Endothelial cell of umbilical vein (primary cell): ENCODE measurements at regions of chr19 and their contacts with region 1.

Region 1: GRCh38 chr19:1020868-1021425 is at the start of gene TMEM259:
- DNase-seq: peak; percentile 97
- H3K4me3 ChIP-seq: peak within 1 kb of the TSS; percentile 80 to 90 (median 88)
- H3K27ac ChIP-seq: peak within 1 kb of the TSS; percentile 95
- H3K4me1 ChIP-seq: peaks cover 40% of the 10 kb centered on the region
- H3K27me3 ChIP-seq: no peaks in the 10 kb centered on the region
- CTCF ChIP-seq: no peak
- POLR2A ChIP-seq: no peak
- total RNA-seq, gene TMEM259: 142 and 147 TPM in 2 replicates

Region 2: GRCh38 chr19:958967-959820 is 61.8 kb before region 1 on chr19:
- CTCF ChIA-PET with region 1: no interaction called
- POLR2A ChIA-PET with region 1: no interaction called
- dilution Hi-C with region 1: no loop called
- intact Hi-C with region 1: no loop called
- DNase-seq: no peak
- H3K4me3 ChIP-seq: no peak overlapping the region
- H3K27ac ChIP-seq: no peak overlapping the region
- H3K4me1 ChIP-seq: no peaks in the 10 kb centered on the region
- H3K27me3 ChIP-seq: no peaks in the 10 kb centered on the region
- CTCF ChIP-seq: no peak
- POLR2A ChIP-seq: no peak

Region 3: DNA sequence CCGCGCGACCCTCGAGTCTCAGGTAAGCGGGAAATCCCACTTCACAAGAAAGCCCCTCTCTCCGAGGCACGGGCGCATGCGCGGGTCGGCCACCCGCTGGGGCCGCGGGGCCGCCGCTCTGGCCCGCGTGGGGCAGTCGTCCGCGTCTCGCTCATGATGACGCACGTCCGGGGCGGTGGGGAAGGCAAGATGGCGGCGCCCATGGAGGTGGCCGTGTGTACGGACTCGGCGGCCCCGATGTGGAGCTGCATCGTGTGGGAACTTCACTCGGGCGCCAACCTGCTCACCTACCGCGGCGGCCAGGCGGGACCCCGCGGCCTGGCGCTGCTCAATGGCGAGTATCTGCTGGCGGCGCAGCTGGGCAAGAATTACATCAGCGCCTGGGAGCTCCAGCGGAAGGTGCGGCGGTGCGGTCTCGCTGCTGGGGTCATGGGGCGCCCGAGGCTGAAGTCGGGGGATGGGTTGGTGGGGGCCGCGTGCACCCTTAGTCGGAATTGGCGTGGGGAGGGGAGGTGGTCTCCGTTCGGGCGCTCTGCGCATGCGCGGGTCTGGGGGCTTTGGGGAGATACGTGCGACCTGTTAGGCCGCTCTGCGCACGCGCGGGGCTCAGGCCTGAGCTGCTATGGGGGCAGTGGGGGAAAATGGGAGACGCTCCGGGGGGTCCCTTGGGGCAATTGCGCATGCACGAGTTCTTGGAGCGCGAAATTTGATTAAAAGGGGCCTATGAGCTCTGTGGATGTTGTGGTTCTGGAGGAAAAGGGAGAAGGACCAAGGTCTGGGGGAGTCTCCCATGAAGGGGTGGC is 36.6 kb before region 1 on chr19 and contains the start of gene WDR18:
- CTCF ChIA-PET with region 1: interaction called, 5 read pairs
- POLR2A ChIA-PET with region 1: no interaction called
- dilution Hi-C with region 1: no loop called
- intact Hi-C with region 1: loop called (anchors 1 kb)
- DNase-seq: peak; percentile 85
- H3K4me3 ChIP-seq: peak within 1 kb of the TSS; percentile 79 to 95 (median 83)
- H3K27ac ChIP-seq: peak within 1 kb of the TSS; percentile 79
- H3K4me1 ChIP-seq: peaks cover 11% of the 10 kb centered on the region
- H3K27me3 ChIP-seq: no peaks in the 10 kb centered on the region
- CTCF ChIP-seq: peak in 1 of 2 donors; percentile 19
- POLR2A ChIP-seq: peak; percentile 67
- total RNA-seq, gene WDR18: 54.8 and 74.7 TPM in 2 replicates

Region 4: GRCh38 chr19:1001538-1002166 is 19.3 kb before region 1 on chr19:
- CTCF ChIA-PET with region 1: interaction called, 4 read pairs
- POLR2A ChIA-PET with region 1: interaction called, 3 read pairs
- dilution Hi-C with region 1: no loop called
- intact Hi-C with region 1: loop called (anchors 2 kb)
- DNase-seq: peak; percentile 37
- H3K4me3 ChIP-seq: no peak overlapping the region
- H3K27ac ChIP-seq: no peak overlapping the region
- H3K4me1 ChIP-seq: no peaks in the 10 kb centered on the region
- H3K27me3 ChIP-seq: peaks cover 17 to 19% of the 10 kb centered on the region in 2 experiments
- CTCF ChIP-seq: peak; percentile 84 to 89
- POLR2A ChIP-seq: no peak

Region 5: DNA sequence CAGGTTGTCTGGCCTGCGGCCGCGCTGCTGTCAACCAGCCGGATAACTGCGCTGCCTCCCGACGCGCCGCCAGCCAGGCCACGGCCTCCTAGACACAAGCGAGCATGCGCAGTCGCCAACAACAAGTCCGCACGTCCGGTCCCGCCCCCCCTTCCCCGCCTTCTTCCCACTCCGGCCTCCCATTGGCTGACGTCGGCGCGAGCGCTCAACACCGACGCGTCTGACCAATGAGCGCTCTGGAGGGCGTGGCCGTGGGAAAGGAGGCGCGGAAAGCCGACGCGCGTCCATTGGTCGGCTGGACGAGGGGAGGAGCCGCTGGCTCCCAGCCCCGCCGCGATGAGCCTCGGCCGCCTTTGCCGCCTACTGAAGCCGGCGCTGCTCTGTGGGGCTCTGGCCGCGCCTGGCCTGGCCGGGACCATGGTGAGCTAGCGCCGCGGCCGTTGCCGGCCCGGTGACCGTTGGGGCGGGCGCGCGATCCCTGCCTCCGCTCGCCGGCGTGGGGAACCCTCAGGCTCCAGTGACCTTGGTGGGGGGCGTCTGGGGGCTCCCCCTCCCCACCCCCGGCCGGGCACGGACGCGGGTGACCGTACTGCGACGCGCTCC is 82.9 kb after region 1 on chr19 and contains the start of gene GPX4:
- CTCF ChIA-PET with region 1: interaction called, 3 read pairs
- POLR2A ChIA-PET with region 1: no interaction called
- dilution Hi-C with region 1: no loop called
- intact Hi-C with region 1: loop called (anchors 1 kb)
- DNase-seq: peak; percentile 99
- H3K4me3 ChIP-seq: peak within 1 kb of the TSS; percentile 33 to 58 (median 52)
- H3K27ac ChIP-seq: peak within 1 kb of the TSS; percentile 93
- H3K4me1 ChIP-seq: peaks cover 31% of the 10 kb centered on the region
- H3K27me3 ChIP-seq: no peaks in the 10 kb centered on the region
- CTCF ChIP-seq: no peak
- POLR2A ChIP-seq: peak; percentile 99
- total RNA-seq, gene GPX4: 445 and 469 TPM in 2 replicates

Region 6: GRCh38 chr19:1183534-1184172 is 162.7 kb after region 1 on chr19:
- CTCF ChIA-PET with region 1: no interaction called
- POLR2A ChIA-PET with region 1: no interaction called
- dilution Hi-C with region 1: no loop called
- intact Hi-C with region 1: loop called (anchors 5 kb)
- DNase-seq: peak; percentile 48
- H3K4me3 ChIP-seq: no peak overlapping the region
- H3K27ac ChIP-seq: peak overlapping the region; percentile 81
- H3K4me1 ChIP-seq: peaks cover 20% of the 10 kb centered on the region
- H3K27me3 ChIP-seq: no peaks in the 10 kb centered on the region
- CTCF ChIP-seq: no peak
- POLR2A ChIP-seq: no peak